ENCODE measurements at regions of chr14 and their contacts with region 1.

Region 1: DNA sequence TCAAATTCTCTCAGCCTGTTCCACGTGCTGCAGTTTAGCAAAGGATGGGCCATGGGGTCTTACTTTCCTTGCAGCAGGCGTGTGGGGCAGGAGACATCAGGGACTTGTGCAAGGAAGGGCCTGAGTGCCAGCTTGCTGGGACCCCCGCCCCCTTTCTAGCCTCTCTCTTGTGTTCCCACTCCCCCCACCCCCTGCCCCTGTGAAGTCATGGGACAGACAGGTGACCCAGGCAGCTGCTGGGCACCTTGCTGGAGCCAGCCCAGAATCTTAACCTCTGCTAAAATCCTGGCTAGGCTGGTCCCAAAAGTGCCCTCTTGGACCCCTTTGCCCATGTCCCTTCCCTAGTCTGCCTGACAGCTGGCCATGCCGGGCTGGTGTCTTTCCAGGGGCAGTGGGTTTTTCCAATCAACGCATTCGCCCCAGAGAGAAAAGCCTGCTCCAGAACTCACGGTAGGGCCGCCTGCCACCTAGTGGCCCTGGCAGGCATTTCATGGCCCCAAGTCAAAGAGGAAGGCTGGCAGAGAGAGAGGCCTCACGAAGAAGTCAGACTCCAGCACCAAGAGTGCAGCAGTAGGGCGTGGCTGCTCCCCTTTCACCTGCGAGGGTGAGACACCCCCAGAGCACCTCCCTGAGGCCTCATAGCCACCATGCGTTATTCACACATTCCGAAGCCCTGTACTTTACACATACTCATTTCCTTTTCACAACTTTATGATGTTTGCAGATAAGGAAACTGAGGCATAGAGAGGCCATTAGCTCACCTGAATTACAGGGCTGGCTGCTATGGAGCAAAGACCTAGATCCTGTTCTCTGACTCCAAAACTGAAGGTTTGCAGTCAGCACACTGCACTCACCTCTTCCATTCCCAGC is 67.4 kb downstream of the LGMN start:
- DNase-seq: peak in 9 of 10 donors; percentile 53 to 94 (median 70)

Region 2: DNA sequence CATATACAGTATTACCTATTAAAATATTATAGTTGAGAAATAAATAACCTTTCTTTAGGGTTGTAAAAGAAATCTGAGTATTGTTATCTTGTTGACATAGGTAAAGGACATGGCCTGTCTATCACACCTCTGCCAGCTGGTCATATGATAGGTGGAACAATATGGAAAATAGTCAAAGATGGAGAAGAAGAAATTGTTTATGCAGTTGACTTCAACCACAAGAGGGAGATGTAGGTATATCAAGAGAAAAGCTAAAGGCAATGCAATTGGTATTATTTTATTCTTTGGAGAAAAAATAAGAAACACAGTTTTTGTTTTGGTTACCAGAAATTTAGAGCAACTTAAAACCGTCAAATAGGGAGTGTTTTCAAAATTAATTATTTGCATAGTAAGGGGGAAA is 545.7 kb before region 1 on chr14:
- intact Hi-C with region 1: loop called (anchors 5 kb)
- DNase-seq: no peak